B cell (primary cell): ENCODE measurements at regions of chr6 and their contacts with region 1.

Region 1: GRCh38 chr6:89352278-89353117 is at the start of gene UBE2J1:
- DNase-seq: peak; percentile 87
- ATAC-seq: peak; percentile 81
- H3K4me3 ChIP-seq: peak within 1 kb of the TSS; percentile 72 to 99 (median 82)
- H3K4me3 Mint-ChIP-seq: peak within 1 kb of the TSS; percentile 93
- H3K27ac ChIP-seq: peak within 1 kb of the TSS; percentile 83 to 94
- H3K27ac Mint-ChIP-seq: peak within 1 kb of the TSS; percentile 95
- H3K4me1 ChIP-seq: peaks cover 73 to 74% of the 10 kb centered on the region in 2 donors
- H3K4me1 Mint-ChIP-seq: peaks cover 78% of the 10 kb centered on the region
- H3K27me3 ChIP-seq: no peaks in the 10 kb centered on the region
- H3K27me3 Mint-ChIP-seq: no peaks in the 10 kb centered on the region
- CTCF ChIP-seq: no peak
- total RNA-seq, gene UBE2J1: 28.0 and 31.1 TPM in 2 replicates

Region 2: DNA sequence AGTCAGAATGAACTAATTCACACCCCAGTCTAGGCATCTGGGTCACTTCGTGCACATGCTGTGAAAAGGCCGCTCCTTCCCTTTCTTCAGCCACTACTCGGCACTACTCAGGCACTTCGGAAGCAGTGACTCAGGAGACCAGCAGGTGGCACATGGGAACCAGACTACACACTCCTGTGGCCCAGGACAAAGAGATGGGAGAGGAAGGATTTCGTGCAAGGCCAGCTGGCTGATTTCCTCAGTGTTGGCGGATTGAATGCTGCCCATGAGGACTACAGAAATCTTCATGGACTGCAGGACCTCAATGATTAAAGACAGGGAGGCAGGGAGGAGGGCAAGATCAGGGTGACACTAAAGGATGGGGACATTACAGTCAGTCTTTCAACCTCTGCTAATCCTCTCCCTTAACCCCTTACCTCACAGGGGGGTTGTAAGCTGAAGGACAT is 1422.6 kb before region 1 on chr6:
- CTCF ChIA-PET with region 1: no interaction called
- POLR2A ChIA-PET with region 1: no interaction called
- intact Hi-C with region 1: loop called (anchors 10 kb)
- DNase-seq: peak; percentile 83
- ATAC-seq: peak; percentile 70
- H3K4me3 ChIP-seq: no peak overlapping the region
- H3K4me3 Mint-ChIP-seq: no peak overlapping the region
- H3K27ac ChIP-seq: no peak overlapping the region
- H3K27ac Mint-ChIP-seq: no peak overlapping the region
- H3K4me1 ChIP-seq: peaks cover 28 to 30% of the 10 kb centered on the region in 2 donors
- H3K4me1 Mint-ChIP-seq: peaks cover 34% of the 10 kb centered on the region
- H3K27me3 ChIP-seq: no peaks in the 10 kb centered on the region
- H3K27me3 Mint-ChIP-seq: no peaks in the 10 kb centered on the region
- CTCF ChIP-seq: peak; percentile 81

Region 3: GRCh38 chr6:88804701-88805100 is 547.8 kb before region 1 on chr6:
- CTCF ChIA-PET with region 1: no interaction called
- POLR2A ChIA-PET with region 1: no interaction called
- intact Hi-C with region 1: no loop called
- DNase-seq: no peak
- ATAC-seq: no peak
- H3K4me3 ChIP-seq: no peak overlapping the region
- H3K4me3 Mint-ChIP-seq: no peak overlapping the region
- H3K27ac ChIP-seq: no peak overlapping the region
- H3K27ac Mint-ChIP-seq: no peak overlapping the region
- H3K4me1 ChIP-seq: no peaks in the 10 kb centered on the region
- H3K4me1 Mint-ChIP-seq: no peaks in the 10 kb centered on the region
- H3K27me3 ChIP-seq: no peaks in the 10 kb centered on the region
- H3K27me3 Mint-ChIP-seq: no peaks in the 10 kb centered on the region
- CTCF ChIP-seq: no peak

Region 4: GRCh38 chr6:89066940-89067646 is 285.4 kb before region 1 on chr6:
- CTCF ChIA-PET with region 1: no interaction called
- POLR2A ChIA-PET with region 1: no interaction called
- intact Hi-C with region 1: no loop called
- DNase-seq: no peak
- ATAC-seq: no peak
- H3K4me3 ChIP-seq: no peak overlapping the region
- H3K4me3 Mint-ChIP-seq: no peak overlapping the region
- H3K27ac ChIP-seq: no peak overlapping the region
- H3K27ac Mint-ChIP-seq: no peak overlapping the region
- H3K4me1 ChIP-seq: no peaks in the 10 kb centered on the region
- H3K4me1 Mint-ChIP-seq: no peaks in the 10 kb centered on the region
- H3K27me3 ChIP-seq: no peaks in the 10 kb centered on the region
- H3K27me3 Mint-ChIP-seq: no peaks in the 10 kb centered on the region
- CTCF ChIP-seq: no peak

Region 5: GRCh38 chr6:89080542-89081422 is 271.7 kb before region 1 on chr6 and contains the start of gene PNRC1:
- CTCF ChIA-PET with region 1: interaction called, 6 read pairs
- POLR2A ChIA-PET with region 1: interaction called, 12 read pairs
- intact Hi-C with region 1: loop called (anchors 1 kb)
- DNase-seq: peak; percentile 100
- ATAC-seq: peak; percentile 76
- H3K4me3 ChIP-seq: peak within 1 kb of the TSS; percentile 81 to 100 (median 98)
- H3K4me3 Mint-ChIP-seq: peak within 1 kb of the TSS; percentile 99
- H3K27ac ChIP-seq: peak within 1 kb of the TSS; percentile 99
- H3K27ac Mint-ChIP-seq: peak within 1 kb of the TSS; percentile 98
- H3K4me1 ChIP-seq: peaks cover 25 to 29% of the 10 kb centered on the region in 2 donors
- H3K4me1 Mint-ChIP-seq: peaks cover 38% of the 10 kb centered on the region
- H3K27me3 ChIP-seq: no peaks in the 10 kb centered on the region
- H3K27me3 Mint-ChIP-seq: no peaks in the 10 kb centered on the region
- CTCF ChIP-seq: no peak
- total RNA-seq, gene PNRC1: 460 and 486 TPM in 2 replicates

Region 6: GRCh38 chr6:89297695-89298351 is 54.7 kb before region 1 on chr6:
- CTCF ChIA-PET with region 1: no interaction called
- POLR2A ChIA-PET with region 1: no interaction called
- intact Hi-C with region 1: no loop called
- DNase-seq: peak; percentile 19
- ATAC-seq: peak; percentile 73
- H3K4me3 ChIP-seq: peak overlapping the region in 1 of 5 experiments; percentile 12
- H3K4me3 Mint-ChIP-seq: peak overlapping the region; percentile 1
- H3K27ac ChIP-seq: no peak overlapping the region
- H3K27ac Mint-ChIP-seq: no peak overlapping the region
- H3K4me1 ChIP-seq: peaks cover 7 to 12% of the 10 kb centered on the region in 2 donors
- H3K4me1 Mint-ChIP-seq: peaks cover 17% of the 10 kb centered on the region
- H3K27me3 ChIP-seq: no peaks in the 10 kb centered on the region
- H3K27me3 Mint-ChIP-seq: no peaks in the 10 kb centered on the region
- CTCF ChIP-seq: no peak

Region 7: DNA sequence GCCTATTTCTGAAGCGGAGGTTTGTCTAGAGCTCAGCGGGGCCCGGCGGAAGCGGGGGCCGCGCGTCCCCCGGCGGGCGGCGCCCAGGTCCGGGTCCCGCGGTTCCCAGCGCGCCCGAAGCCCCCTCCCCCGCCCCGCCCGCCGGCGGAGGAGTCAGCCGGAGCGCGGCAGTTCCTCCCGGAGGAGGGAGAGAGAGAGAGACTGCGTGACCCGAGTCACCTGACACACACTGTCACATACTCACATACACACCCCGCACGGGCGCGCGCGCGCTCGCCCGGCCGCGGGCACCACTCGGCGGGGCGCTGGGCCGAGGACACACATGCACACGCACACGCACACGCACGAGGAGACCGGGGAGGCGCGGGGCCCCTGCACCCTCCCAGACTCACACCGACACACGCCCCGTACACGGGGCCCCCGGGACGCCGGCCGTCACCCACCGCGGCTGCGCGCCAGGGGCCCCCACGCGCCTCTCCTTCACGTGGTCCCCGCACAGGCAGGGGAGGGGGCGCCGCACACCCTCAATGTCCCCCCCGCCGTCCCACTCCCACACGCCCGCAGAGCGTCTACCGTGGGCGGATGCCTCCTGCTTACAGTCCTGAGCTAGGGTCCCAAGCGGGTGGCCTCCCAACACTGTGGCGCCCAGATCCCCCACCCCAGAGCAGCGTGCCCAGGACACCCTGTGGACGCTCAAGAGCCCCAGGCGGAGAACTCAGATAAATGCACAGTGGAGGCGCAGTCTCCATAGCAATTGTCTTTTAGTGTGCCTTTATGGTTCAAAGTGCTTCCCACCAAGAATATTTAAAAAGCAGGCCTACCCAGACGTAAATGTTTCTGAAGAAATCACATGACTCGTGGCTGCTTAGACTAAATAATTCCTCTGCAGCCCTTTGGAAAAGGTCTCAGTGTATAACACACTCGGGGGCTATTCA is 59.8 kb after region 1 on chr6 and contains the start of gene RRAGD:
- CTCF ChIA-PET with region 1: no interaction called
- POLR2A ChIA-PET with region 1: interaction called, 3 read pairs
- intact Hi-C with region 1: loop called (anchors 5 kb)
- DNase-seq: peak; percentile 81
- ATAC-seq: peak; percentile 69
- H3K4me3 ChIP-seq: peak within 1 kb of the TSS; percentile 44 to 81 (median 66)
- H3K4me3 Mint-ChIP-seq: peak within 1 kb of the TSS; percentile 96
- H3K27ac ChIP-seq: peak within 1 kb of the TSS in 1 of 2 donors; percentile 13
- H3K27ac Mint-ChIP-seq: peak within 1 kb of the TSS; percentile 80
- H3K4me1 ChIP-seq: peaks cover 16 to 19% of the 10 kb centered on the region in 2 donors
- H3K4me1 Mint-ChIP-seq: peaks cover 19% of the 10 kb centered on the region
- H3K27me3 ChIP-seq: peaks cover 0 to 34% (median 17%) of the 10 kb centered on the region in 4 experiments
- H3K27me3 Mint-ChIP-seq: peaks cover 25% of the 10 kb centered on the region
- CTCF ChIP-seq: no peak
- total RNA-seq, gene RRAGD: 2.7 and 4.5 TPM in 2 replicates

Region 8: DNA sequence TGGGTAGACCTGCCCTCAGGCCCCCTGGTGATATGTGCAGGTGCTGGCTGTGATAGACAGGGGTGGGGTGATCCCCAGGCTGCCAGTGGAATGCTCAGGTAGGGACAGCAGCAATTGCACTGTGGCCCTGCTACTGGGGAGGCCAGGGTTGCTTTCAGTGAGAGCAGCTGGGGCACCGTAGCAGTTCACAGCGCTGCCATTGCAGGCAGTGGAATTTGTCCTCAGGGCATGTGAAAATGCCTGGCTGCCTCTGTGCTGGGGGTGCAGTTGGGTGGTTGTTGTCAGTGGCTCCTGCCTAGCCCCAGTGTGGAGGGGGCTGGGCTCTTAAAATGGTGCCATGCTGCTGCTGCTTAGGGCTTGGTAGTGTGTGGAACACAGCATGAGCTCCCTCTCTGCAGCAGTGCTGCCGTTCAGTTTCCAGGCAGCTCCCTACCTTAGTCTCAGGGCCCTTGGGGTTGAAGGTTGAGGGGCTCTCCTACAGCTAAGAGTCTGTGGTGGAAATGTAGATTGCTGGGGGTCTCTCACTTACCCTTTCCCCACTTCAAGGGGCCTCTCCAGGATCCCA is 565.4 kb after region 1 on chr6:
- CTCF ChIA-PET with region 1: no interaction called
- POLR2A ChIA-PET with region 1: no interaction called
- intact Hi-C with region 1: no loop called
- DNase-seq: no peak
- ATAC-seq: no peak
- H3K4me3 ChIP-seq: no peak overlapping the region
- H3K4me3 Mint-ChIP-seq: no peak overlapping the region
- H3K27ac ChIP-seq: no peak overlapping the region
- H3K27ac Mint-ChIP-seq: no peak overlapping the region
- H3K4me1 ChIP-seq: no peaks in the 10 kb centered on the region
- H3K4me1 Mint-ChIP-seq: peaks cover 2% of the 10 kb centered on the region
- H3K27me3 ChIP-seq: no peaks in the 10 kb centered on the region
- H3K27me3 Mint-ChIP-seq: peaks cover 10% of the 10 kb centered on the region
- CTCF ChIP-seq: no peak

Region 9: DNA sequence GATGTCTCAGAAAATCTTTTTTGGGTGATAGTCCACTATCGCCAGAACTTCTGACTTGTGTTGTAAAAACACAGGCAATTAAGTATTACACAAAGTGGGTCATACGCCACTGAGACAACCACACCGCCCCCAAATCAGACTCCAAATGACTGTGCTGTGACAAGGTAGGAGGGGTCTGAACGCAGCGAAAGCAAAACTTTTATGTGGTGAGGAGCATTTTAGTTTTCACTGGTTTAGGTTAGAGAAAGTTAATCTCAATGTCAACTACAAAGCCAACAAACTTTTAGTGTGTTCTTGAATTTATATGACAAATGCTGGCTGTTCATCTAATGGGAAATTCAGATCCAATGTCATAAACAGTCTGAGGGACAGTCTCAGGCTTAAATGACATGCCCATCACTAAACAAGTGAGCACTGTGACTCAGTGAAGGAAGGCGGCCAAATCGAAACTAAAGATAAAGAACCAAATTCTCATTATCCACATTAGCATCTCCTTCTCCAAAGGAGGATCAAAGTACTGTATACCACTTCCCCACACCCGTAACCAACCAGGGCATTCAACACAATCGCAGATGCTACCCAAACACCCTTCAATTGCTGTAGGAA is 728.5 kb after region 1 on chr6:
- CTCF ChIA-PET with region 1: no interaction called
- POLR2A ChIA-PET with region 1: no interaction called
- intact Hi-C with region 1: loop called (anchors 10 kb)
- DNase-seq: peak; percentile 54
- ATAC-seq: peak; percentile 48
- H3K4me3 ChIP-seq: peak overlapping the region in 4 of 5 experiments; percentile 11 to 48 (median 40)
- H3K4me3 Mint-ChIP-seq: peak overlapping the region; percentile 90
- H3K27ac ChIP-seq: peak overlapping the region; percentile 4 to 52
- H3K27ac Mint-ChIP-seq: peak overlapping the region; percentile 90
- H3K4me1 ChIP-seq: peaks cover 61 to 72% of the 10 kb centered on the region in 2 donors
- H3K4me1 Mint-ChIP-seq: peaks cover 92% of the 10 kb centered on the region
- H3K27me3 ChIP-seq: no peaks in the 10 kb centered on the region
- H3K27me3 Mint-ChIP-seq: no peaks in the 10 kb centered on the region
- CTCF ChIP-seq: no peak